ENCODE measurements at regions of chr5 and their contacts with region 1.

Region 1: GRCh38 chr5:37412515-37413277 is 33.6 kb downstream of the WDR70 start:
- DNase-seq: peak; percentile 80 to 86 (median 84)
- ATAC-seq: peak; percentile 98
- H3K4me3 ChIP-seq: no peak overlapping the region
- H3K27ac ChIP-seq: no peak overlapping the region
- H3K4me1 ChIP-seq: no peaks in the 10 kb centered on the region
- H3K27me3 ChIP-seq: no peaks in the 10 kb centered on the region
- CTCF ChIP-seq: peak; percentile 95 to 100 (median 99)
- EP300 ChIP-seq: 0 out of 2 replicates have a peak, but pooled peaks have one; percentile 40
- POLR2A ChIP-seq: no peak
- RAD21 ChIP-seq: peak; percentile 91 to 99

Region 2: DNA sequence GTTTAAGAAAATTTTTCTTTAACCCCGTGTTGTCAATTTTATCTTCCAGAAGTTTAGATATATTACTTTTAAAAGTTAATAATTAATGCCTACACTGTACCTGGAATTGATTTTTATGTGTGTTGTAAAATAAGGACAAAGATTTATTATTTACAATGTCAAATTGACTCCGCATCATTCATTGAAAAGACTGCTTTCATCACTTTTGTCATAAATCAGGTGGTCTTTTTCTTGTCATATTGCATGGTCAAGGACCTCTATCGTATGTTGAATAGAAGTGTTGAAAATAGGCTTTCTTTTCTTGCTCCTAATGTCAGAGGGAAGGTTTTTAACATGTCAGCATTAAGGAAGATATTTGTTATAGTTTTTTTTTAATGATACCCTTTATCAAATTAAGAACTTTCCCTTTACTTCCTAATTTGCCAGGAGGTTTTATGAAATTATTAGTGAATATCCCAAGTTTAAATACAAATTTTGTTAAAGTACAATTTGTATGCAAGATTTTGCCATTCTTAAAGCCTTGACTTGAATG is 59.0 kb after region 1 on chr5:
- CTCF ChIA-PET with region 1: no interaction called
- POLR2A ChIA-PET with region 1: no interaction called
- in situ Hi-C with region 1: no loop called
- intact Hi-C with region 1: no loop called
- DNase-seq: no peak
- ATAC-seq: no peak
- H3K4me3 ChIP-seq: no peak overlapping the region
- H3K27ac ChIP-seq: no peak overlapping the region
- H3K4me1 ChIP-seq: no peaks in the 10 kb centered on the region
- H3K27me3 ChIP-seq: no peaks in the 10 kb centered on the region
- CTCF ChIP-seq: no peak
- EP300 ChIP-seq: no peak
- POLR2A ChIP-seq: no peak
- RAD21 ChIP-seq: no peak

Region 3: GRCh38 chr5:37554938-37555337 is 142.2 kb after region 1 on chr5:
- CTCF ChIA-PET with region 1: interaction called, 3 read pairs
- POLR2A ChIA-PET with region 1: no interaction called
- in situ Hi-C with region 1: no loop called
- intact Hi-C with region 1: loop called (anchors 2 kb)
- DNase-seq: peak; percentile 18 to 48 (median 23)
- ATAC-seq: no peak
- H3K4me3 ChIP-seq: no peak overlapping the region
- H3K27ac ChIP-seq: no peak overlapping the region
- H3K4me1 ChIP-seq: peaks cover 0 to 22% of the 10 kb centered on the region in 2 experiments; a peak in 4 of 5 replicates
- H3K27me3 ChIP-seq: no peaks in the 10 kb centered on the region
- CTCF ChIP-seq: peak; percentile 50 to 54 (median 51)
- EP300 ChIP-seq: no peak
- POLR2A ChIP-seq: no peak
- RAD21 ChIP-seq: peak; percentile 40 to 60

Region 4: DNA sequence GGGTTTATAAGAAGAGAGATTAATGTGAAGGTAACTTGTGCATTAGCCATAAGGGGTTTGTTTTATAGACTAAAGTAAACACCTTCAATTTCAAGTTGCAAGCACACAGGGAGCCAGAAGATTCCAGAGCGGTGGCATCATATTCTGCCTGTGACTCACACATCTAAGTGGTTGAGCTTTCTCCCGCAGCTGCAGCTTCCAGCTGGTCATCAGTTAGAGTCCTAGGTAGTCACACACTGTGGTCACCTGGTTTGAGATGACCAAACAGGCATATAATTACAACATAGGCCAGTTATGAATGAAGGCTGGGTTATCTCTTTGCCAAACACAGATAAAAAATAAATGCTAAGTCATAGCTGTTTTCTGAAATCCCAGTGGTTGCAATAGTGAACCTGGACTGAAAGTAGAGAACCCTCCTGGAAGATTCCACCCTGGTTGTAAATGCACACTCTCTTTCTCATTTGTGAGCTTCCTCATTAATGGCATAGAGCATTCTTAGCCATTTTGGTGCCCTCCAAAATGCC is 255.9 kb after region 1 on chr5:
- CTCF ChIA-PET with region 1: no interaction called
- POLR2A ChIA-PET with region 1: no interaction called
- in situ Hi-C with region 1: no loop called
- intact Hi-C with region 1: loop called (anchors 5 kb)
- DNase-seq: peak; percentile 29 to 78 (median 44)
- ATAC-seq: peak; percentile 84
- H3K4me3 ChIP-seq: no peak overlapping the region
- H3K27ac ChIP-seq: peak overlapping the region; percentile 46; the same call in 1 of the 3 replicates
- H3K4me1 ChIP-seq: peaks cover 2 to 22% of the 10 kb centered on the region in 2 experiments; a peak in 4 of 5 replicates
- H3K27me3 ChIP-seq: no peaks in the 10 kb centered on the region
- CTCF ChIP-seq: no peak
- EP300 ChIP-seq: peak; percentile 65
- POLR2A ChIP-seq: no peak
- RAD21 ChIP-seq: no peak

Region 5: GRCh38 chr5:37757980-37758583 is 345.4 kb after region 1 on chr5:
- CTCF ChIA-PET with region 1: interaction called, 5 read pairs
- POLR2A ChIA-PET with region 1: no interaction called
- in situ Hi-C with region 1: no loop called
- intact Hi-C with region 1: loop called (anchors 5 kb)
- DNase-seq: no peak
- ATAC-seq: peak; percentile 64; the same call in 2 of the 3 replicates
- H3K4me3 ChIP-seq: no peak overlapping the region
- H3K27ac ChIP-seq: no peak overlapping the region
- H3K4me1 ChIP-seq: no peaks in the 10 kb centered on the region
- H3K27me3 ChIP-seq: no peaks in the 10 kb centered on the region; a peak in 1 of 5 replicates
- CTCF ChIP-seq: peak in 2 of 3 experiments; percentile 32 to 41; a peak in 3 of 6 replicates
- EP300 ChIP-seq: no peak
- POLR2A ChIP-seq: no peak
- RAD21 ChIP-seq: peak in 1 of 2 experiments; percentile 60; a peak in 2 of 4 replicates

Region 6: GRCh38 chr5:37837414-37838032 is 424.8 kb after region 1 on chr5:
- CTCF ChIA-PET with region 1: interaction called, 3 read pairs
- POLR2A ChIA-PET with region 1: no interaction called
- in situ Hi-C with region 1: no loop called
- intact Hi-C with region 1: loop called (anchors 2 kb)
- DNase-seq: peak; percentile 73 to 78 (median 76)
- ATAC-seq: peak; percentile 95
- H3K4me3 ChIP-seq: no peak overlapping the region
- H3K27ac ChIP-seq: no peak overlapping the region
- H3K4me1 ChIP-seq: peaks cover 0 to 31% of the 10 kb centered on the region in 2 experiments; a peak in 2 of 5 replicates
- H3K27me3 ChIP-seq: peaks cover 49 to 79% of the 10 kb centered on the region in 2 experiments
- CTCF ChIP-seq: peak; percentile 80 to 85 (median 81)
- EP300 ChIP-seq: no peak
- POLR2A ChIP-seq: no peak
- RAD21 ChIP-seq: peak; percentile 59 to 87

Region 7: DNA sequence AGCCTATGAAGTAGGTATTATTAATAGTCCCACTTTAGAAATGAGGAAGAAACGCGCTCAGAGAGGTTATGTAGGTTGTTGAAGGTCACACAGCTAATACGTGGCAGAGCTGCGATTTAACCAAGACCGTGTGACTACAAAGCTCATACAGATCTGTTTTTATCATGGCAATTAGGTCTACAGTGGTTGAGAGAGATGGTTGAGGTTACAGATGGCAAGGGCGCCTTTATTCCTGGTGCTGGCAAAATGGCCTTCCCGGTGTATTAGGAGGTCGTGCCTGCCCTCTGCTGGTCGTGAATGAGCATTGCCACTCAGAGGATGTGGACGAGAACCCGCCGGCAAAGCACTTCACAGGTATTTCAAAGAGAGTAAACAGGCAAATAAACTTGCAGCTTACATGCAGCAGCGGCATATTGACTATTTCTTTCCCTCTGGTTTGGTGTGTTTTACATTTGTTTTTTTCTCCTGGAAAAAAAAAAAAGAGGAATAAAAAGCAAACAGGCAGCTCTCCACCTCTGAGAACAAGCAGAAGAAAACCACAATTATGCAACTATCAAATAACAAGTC is 780.4 kb after region 1 on chr5:
- CTCF ChIA-PET with region 1: interaction called, 23 read pairs
- POLR2A ChIA-PET with region 1: no interaction called
- in situ Hi-C with region 1: loop called (anchors 5 kb)
- intact Hi-C with region 1: loop called (anchors 5 kb)
- DNase-seq: peak; percentile 74 to 85 (median 82)
- ATAC-seq: peak; percentile 89
- H3K4me3 ChIP-seq: no peak overlapping the region
- H3K27ac ChIP-seq: no peak overlapping the region
- H3K4me1 ChIP-seq: 0 out of 5 replicates have a peak, but pooled peaks cover 0 to 2% of the 10 kb centered on the region in 2 experiments
- H3K27me3 ChIP-seq: peaks cover 17 to 50% of the 10 kb centered on the region in 2 experiments
- CTCF ChIP-seq: peak; percentile 82 to 93 (median 91)
- EP300 ChIP-seq: no peak
- POLR2A ChIP-seq: no peak
- RAD21 ChIP-seq: peak; percentile 92 to 93